ENCODE measurements at regions of chr9 and their contacts with region 1.

Region 1: DNA sequence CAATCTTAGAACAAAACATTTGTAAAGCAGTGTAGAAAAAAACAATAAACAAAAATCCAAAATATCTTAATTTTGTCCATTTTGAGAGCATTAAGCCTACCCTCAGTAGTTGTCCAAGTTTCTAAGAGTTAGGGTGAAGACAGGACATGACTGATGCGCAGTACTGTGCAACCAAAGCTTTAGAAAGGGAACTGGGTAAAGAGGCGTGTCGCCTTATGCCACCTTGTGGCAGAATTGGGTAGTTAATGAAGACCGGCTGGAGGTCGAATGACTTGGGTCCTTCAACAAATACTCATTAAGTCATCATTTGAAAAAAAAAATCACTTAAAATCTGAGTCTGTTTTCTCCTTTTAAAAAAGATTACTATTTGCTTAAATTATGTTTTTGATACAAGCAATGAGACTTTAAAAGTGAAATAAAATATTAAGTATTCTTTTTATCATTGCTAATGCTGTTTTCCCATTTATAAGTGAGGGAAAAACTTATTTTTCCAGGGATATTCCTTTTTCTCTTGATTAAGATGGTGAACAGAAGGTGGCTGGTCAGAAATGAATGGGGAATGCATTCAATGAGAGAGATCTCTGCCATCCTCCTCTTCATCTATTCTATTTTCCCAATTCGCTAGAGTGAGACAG is 3.5 kb upstream of the RNF20 start:
- DNase-seq: peak; percentile 82
- H3K4me3 Mint-ChIP-seq: no peak overlapping the region
- H3K27ac Mint-ChIP-seq: no peak overlapping the region
- H3K4me1 Mint-ChIP-seq: peaks cover 14% of the 10 kb centered on the region
- H3K27me3 Mint-ChIP-seq: no peaks in the 10 kb centered on the region
- CTCF ChIP-seq: peak; percentile 67

Region 2: DNA sequence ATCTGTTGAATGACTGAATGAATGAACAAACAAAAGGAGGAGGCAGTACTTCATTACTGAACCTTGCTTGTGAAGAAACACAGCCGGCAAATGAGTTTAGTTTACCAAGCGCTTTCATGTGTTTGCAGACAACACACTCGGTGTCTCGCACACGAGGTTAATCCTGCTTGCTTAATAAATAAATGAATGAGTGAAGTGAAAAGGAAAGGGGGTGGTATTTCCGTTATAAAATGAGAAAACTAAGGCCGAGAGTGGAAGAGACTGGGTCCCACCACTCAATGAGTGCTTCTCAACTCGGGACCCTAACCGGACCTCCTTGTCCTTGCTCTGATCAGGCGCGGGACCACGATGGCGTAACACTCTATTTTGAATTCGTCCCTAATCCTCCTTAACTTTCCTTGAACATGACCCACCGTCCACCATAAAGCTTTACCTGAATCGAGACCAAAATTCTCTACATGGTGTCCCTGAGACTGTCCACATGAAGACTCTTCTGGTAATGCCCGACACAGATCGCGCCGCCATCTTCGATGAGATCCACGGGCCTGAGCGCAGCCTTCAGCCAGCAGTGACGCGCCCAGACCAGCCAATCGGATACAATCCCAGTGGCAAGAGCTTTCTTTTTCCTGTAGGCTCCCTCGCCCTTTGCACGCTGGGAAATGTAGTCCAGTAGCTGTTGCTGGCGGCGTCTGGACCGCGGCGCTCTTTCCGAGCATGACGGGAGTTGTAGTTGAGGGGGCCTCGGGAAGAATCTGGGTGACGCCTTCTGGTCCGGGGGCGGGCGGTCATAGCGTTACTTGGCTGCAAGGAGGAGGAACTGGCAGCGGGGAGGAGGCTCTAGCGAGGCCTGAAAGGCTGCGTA is 131.9 kb before region 1 on chr9 and contains the starts of genes MRPL50 and ZNF189:
- CTCF ChIA-PET with region 1: no interaction called
- POLR2A ChIA-PET with region 1: interaction called, 16 read pairs
- intact Hi-C with region 1: no loop called
- DNase-seq: peak; percentile 99
- H3K4me3 Mint-ChIP-seq: peak within 1 kb of the TSS; percentile 97
- H3K27ac Mint-ChIP-seq: peak within 1 kb of the TSS; percentile 99
- H3K4me1 Mint-ChIP-seq: peaks cover 39% of the 10 kb centered on the region
- H3K27me3 Mint-ChIP-seq: no peaks in the 10 kb centered on the region
- CTCF ChIP-seq: no peak
- total RNA-seq, gene MRPL50: 15.4 and 16.9 TPM in 2 replicates
- total RNA-seq, gene ZNF189: 17.4 and 20.4 TPM in 2 replicates

Region 3: GRCh38 chr9:101449140-101449721 is 81.0 kb before region 1 on chr9:
- CTCF ChIA-PET with region 1: interaction called, 751 read pairs
- POLR2A ChIA-PET with region 1: interaction called, 3 read pairs
- intact Hi-C with region 1: no loop called
- DNase-seq: peak; percentile 75
- H3K4me3 Mint-ChIP-seq: peak overlapping the region; percentile 83
- H3K27ac Mint-ChIP-seq: no peak overlapping the region
- H3K4me1 Mint-ChIP-seq: peaks cover 19% of the 10 kb centered on the region
- H3K27me3 Mint-ChIP-seq: peaks cover 17% of the 10 kb centered on the region
- CTCF ChIP-seq: peak; percentile 64

Region 4: GRCh38 chr9:101465392-101465791 is 64.8 kb before region 1 on chr9:
- CTCF ChIA-PET with region 1: interaction called, 751 read pairs
- POLR2A ChIA-PET with region 1: interaction called, 17 read pairs
- intact Hi-C with region 1: loop called (anchors 1 kb)
- DNase-seq: peak; percentile 94
- H3K4me3 Mint-ChIP-seq: no peak overlapping the region
- H3K27ac Mint-ChIP-seq: no peak overlapping the region
- H3K4me1 Mint-ChIP-seq: peaks cover 21% of the 10 kb centered on the region
- H3K27me3 Mint-ChIP-seq: no peaks in the 10 kb centered on the region
- CTCF ChIP-seq: peak; percentile 49

Region 5: GRCh38 chr9:101486693-101487442 is 43.3 kb before region 1 on chr9:
- CTCF ChIA-PET with region 1: interaction called, 54 read pairs
- POLR2A ChIA-PET with region 1: interaction called, 29 read pairs
- intact Hi-C with region 1: no loop called
- DNase-seq: peak; percentile 71
- H3K4me3 Mint-ChIP-seq: peak overlapping the region; percentile 82
- H3K27ac Mint-ChIP-seq: peak overlapping the region; percentile 92
- H3K4me1 Mint-ChIP-seq: peaks cover 25% of the 10 kb centered on the region
- H3K27me3 Mint-ChIP-seq: no peaks in the 10 kb centered on the region
- CTCF ChIP-seq: peak; percentile 4